ENCODE measurements at regions of chr9 and their contacts with region 1.

Region 1: DNA sequence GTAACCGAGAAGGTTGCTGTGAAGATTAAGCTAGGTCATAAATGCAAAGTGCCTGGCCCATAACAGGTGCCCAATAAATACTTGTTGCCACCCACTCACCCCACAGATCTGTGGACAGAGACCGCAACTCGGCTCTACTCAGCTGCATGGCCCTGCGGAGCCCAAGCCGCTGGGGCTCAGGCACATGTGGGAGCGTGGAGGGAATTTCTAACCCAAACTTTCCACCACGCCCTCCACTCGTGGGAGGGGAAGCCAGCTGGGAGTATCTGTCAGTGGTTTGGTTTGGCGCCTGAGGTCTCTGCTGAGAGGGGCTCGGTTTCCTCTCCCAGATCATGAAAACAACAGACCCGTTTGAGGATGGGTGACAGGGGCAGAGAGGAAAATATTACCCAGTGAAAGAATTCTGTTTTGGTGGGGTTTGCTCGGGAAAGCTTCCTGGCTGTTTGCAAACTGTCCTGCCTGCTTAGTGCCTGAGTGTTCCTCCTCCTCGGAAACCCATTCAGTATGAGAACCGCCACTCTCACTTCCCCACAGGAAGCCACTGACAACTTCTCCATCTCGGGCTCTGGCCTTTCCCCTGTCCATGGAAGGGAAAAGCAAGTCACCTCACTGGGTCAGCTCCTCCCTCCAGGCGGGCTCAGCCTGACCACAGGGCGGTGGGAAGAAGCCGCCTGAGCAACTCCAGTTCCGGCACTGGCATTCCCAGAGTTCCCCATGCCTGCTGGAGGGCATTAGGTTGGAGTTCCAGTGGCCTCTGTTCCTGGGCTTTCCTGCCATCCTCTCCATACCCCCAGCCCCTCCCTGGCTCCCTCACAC is 60.1 kb downstream of the RGS3 start:
- DNase-seq: peak; percentile 54
- H3K4me3 Mint-ChIP-seq: peak overlapping the region; percentile 77
- H3K27ac Mint-ChIP-seq: peak overlapping the region; percentile 86
- H3K4me1 Mint-ChIP-seq: peaks cover 85% of the 10 kb centered on the region
- H3K27me3 Mint-ChIP-seq: peaks cover 2% of the 10 kb centered on the region

Region 2: GRCh38 chr9:112750111-112750767 is 773.4 kb before region 1 on chr9 and contains the start of gene SNX30:
- intact Hi-C with region 1: loop called (anchors 2 kb)
- DNase-seq: peak; percentile 78
- H3K4me3 Mint-ChIP-seq: peak within 1 kb of the TSS; percentile 86
- H3K27ac Mint-ChIP-seq: peak within 1 kb of the TSS; percentile 88
- H3K4me1 Mint-ChIP-seq: peaks cover 67% of the 10 kb centered on the region
- H3K27me3 Mint-ChIP-seq: peaks cover 5% of the 10 kb centered on the region
- total RNA-seq, gene SNX30: 1.9 and 2.1 TPM in 2 replicates

Region 3: DNA sequence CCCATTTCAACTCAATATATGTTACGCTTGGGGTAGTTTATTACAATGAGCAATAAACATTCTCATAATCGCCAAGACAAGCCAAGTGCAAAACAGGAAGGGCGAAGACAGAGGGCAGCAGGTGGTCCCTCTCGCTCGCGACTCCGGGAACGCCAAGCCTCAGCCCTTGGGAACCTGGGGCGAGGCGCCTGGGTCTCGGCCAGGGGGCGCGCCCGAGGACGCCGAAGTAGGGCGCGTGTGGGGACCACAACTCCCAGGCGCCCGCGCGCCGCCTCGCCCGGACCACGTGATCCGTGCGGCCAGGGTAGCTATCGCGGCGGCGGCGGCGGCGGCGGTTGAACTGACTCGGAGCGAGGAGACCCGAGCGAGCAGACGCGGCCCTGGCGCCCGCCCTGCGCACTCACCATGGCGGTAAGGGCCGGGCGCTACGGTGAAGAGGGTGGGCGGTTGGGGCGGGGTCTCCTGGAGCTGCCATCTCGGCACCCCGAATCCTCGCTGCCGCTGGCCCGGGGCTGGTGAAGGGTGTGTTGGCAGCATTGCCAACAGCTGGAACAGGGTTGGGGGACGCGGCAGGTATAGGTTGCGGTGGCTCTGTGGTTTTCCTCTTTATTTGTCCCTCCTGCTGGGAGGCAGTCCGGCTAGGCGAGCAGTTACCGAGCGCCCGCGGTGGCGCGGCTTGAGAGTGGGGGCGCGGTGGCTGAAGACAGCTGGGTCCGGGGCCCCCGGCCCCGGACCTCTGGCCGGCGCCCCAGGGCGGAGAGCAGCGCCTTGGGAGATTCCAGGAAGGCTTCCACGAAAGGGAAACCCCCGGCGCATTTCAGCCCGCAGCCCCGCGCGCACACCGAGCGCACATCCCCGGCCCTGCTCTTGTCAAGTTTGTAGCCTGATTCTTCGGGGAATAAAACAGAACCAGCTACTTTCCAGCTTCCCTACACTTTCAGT is 372.7 kb before region 1 on chr9 and contains the start of gene SLC31A2:
- intact Hi-C with region 1: loop called (anchors 2 kb)
- DNase-seq: peak; percentile 84
- H3K4me3 Mint-ChIP-seq: peak within 1 kb of the TSS; percentile 80
- H3K27ac Mint-ChIP-seq: peak within 1 kb of the TSS; percentile 44
- H3K4me1 Mint-ChIP-seq: peaks cover 34% of the 10 kb centered on the region
- H3K27me3 Mint-ChIP-seq: peaks cover 13% of the 10 kb centered on the region
- total RNA-seq, gene SLC31A2: 6.0 and 6.5 TPM in 2 replicates

Region 4: GRCh38 chr9:113536483-113537228 is 13.0 kb after region 1 on chr9:
- intact Hi-C with region 1: no loop called
- DNase-seq: no peak
- H3K4me3 Mint-ChIP-seq: no peak overlapping the region
- H3K27ac Mint-ChIP-seq: no peak overlapping the region
- H3K4me1 Mint-ChIP-seq: no peaks in the 10 kb centered on the region
- H3K27me3 Mint-ChIP-seq: no peaks in the 10 kb centered on the region

Region 5: GRCh38 chr9:113548221-113549041 is 24.8 kb after region 1 on chr9:
- intact Hi-C with region 1: loop called (anchors 1 kb)
- DNase-seq: no peak
- H3K4me3 Mint-ChIP-seq: peak overlapping the region; percentile 23
- H3K27ac Mint-ChIP-seq: peak overlapping the region; percentile 92
- H3K4me1 Mint-ChIP-seq: peaks cover 26% of the 10 kb centered on the region
- H3K27me3 Mint-ChIP-seq: no peaks in the 10 kb centered on the region

Region 6: DNA sequence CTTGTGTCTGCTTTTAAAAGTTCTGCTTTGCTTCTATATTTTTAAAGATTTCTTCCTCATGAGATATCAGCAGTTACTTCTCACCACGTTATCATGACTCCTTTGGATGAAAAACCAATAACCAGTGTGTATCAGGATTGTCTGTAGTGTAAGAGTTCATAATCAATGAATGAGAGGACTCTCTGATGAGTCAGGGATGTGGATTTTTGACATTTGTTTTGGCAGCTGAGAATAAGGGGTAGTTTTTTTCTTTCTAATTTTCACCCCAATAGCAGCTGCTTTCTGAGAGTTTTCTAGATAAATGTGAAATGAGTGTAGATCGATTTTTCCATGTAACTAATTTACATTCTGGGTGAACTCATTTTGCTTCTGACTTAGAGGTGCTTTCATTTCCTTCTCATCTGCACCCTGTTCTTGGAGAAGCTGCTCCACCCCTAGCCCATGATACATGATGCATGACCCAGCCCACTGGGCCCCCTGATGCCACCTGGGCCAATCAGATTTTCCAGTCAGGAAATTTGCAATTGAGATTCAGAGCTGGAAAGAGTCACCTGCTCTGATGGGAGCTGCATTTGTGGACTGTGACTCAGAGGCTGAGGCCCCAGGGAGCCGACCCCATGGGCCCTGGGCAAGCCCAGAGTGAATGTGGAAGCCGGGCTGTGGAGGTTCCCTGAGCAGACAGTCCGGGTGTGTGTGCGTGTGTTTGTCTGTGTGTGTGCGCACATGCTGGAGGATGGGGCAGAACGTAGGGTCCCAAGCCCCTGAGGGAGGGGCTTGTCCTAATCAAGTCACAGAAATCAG is 99.2 kb after region 1 on chr9:
- intact Hi-C with region 1: loop called (anchors 1 kb)
- DNase-seq: peak; percentile 18
- H3K4me3 Mint-ChIP-seq: peak overlapping the region; percentile 43
- H3K27ac Mint-ChIP-seq: peak overlapping the region; percentile 93
- H3K4me1 Mint-ChIP-seq: peaks cover 47% of the 10 kb centered on the region
- H3K27me3 Mint-ChIP-seq: peaks cover 2% of the 10 kb centered on the region